ENCODE measurements at regions of chr1 and their contacts with region 1.

Region 1: DNA sequence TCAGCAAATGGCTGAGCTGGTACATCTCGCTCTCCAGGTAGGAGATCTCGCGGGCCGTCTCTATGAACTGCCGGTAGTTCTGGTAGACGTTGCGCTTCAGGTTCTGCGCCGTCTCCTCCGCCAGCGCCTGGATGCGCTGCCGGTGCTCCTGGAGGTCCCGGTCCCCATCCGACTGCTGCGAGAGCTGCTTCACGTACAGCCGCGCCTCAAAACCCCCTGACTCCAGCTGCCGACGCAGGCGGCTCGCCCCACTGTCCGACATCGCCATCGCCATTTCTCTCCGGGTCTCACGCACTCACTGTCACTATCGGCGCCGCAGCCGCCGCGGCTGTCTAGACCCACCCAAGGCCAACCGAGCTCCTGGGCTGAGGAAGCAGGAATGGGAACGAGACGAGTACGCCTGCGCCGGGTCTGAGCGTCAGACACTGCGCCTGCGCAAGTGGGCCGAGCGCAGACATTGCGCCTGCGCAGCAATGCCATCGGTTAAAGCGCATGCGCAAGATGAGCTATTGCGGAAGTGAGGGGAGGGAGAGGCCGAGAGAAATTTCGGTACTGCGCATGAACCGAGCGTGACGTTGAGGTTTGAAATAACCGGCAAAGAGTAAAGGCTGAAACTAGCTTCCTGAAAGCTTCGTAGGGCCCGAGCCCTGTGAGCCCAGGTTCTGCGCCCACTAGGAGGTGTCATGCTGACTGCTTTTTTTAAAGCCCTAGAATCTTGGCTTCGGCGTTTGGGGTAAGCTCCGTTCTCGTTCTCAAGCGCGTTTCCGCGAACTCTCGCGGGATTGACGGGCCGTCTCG is at the start of gene EXOC8:
- DNase-seq: peak; percentile 98
- H3K4me3 ChIP-seq: peak within 1 kb of the TSS; percentile 84 to 95 (median 92)
- H3K27ac ChIP-seq: peak within 1 kb of the TSS; percentile 92 to 98 (median 97)
- H3K4me1 ChIP-seq: peaks cover 51 to 82% (median 65%) of the 10 kb centered on the region in 6 donors
- H3K27me3 ChIP-seq: no peaks in the 10 kb centered on the region
- CTCF ChIP-seq: peak in 4 of 11 experiments; percentile 22 to 51 (median 36)
- POLR2A ChIP-seq: peak in 2 of 3 donors; percentile 18 to 62
- total RNA-seq, gene EXOC8: 19.3 to 23.6 (median 21.3) TPM

Region 2: GRCh38 chr1:231240883-231241735 is 96.6 kb before region 1 on chr1 and contains the start of gene GNPAT:
- intact Hi-C with region 1: loop called (anchors 10 kb)
- DNase-seq: peak; percentile 97
- H3K4me3 ChIP-seq: peak within 1 kb of the TSS; percentile 65 to 89 (median 78)
- H3K27ac ChIP-seq: peak within 1 kb of the TSS; percentile 79 to 89 (median 86)
- H3K4me1 ChIP-seq: peaks cover 15 to 89% (median 55%) of the 10 kb centered on the region in 6 donors
- H3K27me3 ChIP-seq: no peaks in the 10 kb centered on the region
- CTCF ChIP-seq: peak in 1 of 11 experiments; percentile 22
- POLR2A ChIP-seq: peak; percentile 64 to 89 (median 83)
- total RNA-seq, gene GNPAT: 27.9 to 42.6 (median 33.7) TPM

Region 3: DNA sequence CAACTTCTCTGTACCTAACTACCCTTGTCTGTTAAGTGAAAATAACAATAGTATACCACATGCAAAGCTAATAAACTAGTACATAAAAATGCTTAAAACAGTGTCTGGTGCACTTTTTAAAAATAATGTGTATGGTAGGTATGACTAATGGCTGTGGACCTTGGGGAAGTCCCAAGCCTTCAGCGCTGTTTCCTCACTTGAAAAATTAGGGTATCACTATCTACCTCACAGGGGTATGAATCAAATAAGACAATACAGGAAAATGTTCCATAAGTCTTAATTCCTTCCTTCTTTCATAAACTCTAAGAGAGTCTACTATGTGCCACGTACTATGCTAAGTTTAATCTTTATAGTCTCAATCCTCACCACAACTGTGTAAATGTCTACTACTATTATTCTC is 52.4 kb after region 1 on chr1:
- intact Hi-C with region 1: no loop called
- DNase-seq: no peak
- H3K4me3 ChIP-seq: no peak overlapping the region
- H3K27ac ChIP-seq: no peak overlapping the region
- H3K4me1 ChIP-seq: peaks cover 8 to 89% (median 29%) of the 10 kb centered on the region in 6 donors
- H3K27me3 ChIP-seq: no peaks in the 10 kb centered on the region
- CTCF ChIP-seq: no peak
- POLR2A ChIP-seq: no peak